Head of caudate nucleus (tissue), 42 donors: ENCODE measurements at regions of chr6 and their contacts with region 1.

Region 1: DNA sequence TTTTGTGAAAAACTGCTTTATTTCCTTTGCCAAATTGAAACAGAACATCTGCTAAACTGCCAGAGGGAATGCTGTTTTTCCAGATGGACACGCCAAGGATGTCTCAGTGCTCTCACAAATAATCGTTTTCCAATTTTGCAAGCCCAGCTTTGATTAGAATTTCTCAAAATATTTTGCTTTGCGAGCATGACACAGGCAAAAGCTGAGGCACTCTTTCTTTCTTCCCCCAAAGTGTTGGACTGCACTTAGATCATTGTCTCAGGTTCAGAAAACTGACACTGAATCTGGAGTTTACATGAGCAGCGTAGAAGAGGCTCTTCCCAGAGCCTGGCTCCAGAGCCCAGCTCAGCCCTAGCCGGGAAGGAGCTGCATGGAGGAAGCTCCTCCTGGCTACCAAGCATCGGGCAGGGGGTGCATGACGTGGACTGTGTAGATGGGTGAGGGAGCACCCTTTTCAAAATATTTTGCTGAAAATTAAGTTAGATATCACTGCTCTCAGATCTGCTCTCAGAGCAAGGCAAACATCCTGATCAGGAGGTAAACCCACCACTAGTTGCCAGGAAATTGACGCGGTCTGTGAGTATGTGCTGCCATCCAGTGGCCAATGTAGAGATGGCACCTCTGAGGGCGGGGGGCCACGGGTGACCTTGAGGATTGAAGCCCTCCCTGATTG is 107.5 kb downstream of the SLC22A3 start:
- DNase-seq: peak; percentile 28 to 87 (median 66)

Region 2: GRCh38 chr6:159513074-159513720 is 942.5 kb before region 1 on chr6:
- intact Hi-C with region 1: no loop called
- DNase-seq: no peak

Region 3: GRCh38 chr6:159862103-159862502 is 593.6 kb before region 1 on chr6:
- intact Hi-C with region 1: loop called (anchors 10 kb)
- DNase-seq: peak in 1 of 42 donors; percentile 3

Region 4: DNA sequence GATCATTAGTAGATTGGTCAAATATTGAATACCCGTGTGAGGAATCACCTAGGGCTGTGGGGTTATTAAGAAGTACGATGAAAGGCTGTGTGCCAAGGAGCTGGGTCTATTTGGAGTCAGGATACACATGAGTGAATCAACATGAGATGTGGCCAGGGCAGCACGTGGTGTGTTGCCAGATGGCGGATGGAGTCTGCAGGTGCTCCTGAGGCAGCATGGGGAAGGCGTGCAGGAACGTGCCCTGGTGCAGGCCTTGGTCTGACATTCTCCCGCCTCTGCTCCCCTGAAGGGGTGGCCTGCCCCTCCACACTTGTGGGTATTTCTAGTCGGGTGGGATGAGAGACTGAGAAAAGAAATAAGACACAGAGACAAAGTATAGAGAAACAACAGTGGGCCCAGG is 373.1 kb before region 1 on chr6:
- intact Hi-C with region 1: loop called (anchors 5 kb)
- DNase-seq: peak in 1 of 42 donors; percentile 21

Region 5: DNA sequence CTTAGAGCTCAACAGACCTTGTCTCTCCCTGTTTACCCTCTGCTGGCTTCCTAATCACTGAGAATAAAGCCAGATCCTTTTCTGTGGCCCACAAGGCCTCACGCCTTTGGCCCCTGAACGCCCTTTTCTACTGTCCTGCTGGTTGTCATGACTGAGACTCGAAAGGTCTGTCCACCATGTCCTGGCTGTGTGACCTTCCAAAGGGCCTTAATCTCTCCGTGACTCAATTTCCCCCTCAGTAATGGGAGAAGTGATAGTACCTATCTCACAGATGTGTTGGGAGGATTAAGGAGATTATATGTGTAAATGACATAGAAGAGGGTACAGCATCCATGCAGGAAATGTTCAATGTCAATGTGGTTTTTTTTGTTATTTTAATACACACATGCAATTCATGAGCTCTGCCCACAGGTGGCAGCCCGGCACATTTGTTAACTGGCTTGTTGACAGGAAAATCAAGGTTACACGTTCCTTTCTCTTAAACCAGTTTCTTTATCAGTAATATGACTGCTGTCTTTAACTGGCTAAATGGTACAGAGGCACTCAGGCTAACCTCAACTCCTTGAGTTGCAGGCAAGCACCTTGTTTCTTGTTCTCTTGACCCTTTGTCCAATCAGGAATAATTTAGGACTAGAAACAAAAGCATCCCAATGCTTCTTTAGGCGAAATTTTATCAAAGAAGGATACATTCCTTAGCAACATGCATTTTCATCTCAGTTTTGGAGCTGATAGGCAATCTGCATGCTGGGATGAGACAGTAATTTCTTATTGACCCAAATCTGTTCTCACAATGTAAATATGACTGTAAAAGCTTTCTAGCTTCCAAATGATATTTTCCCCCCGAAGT is 317.5 kb before region 1 on chr6:
- intact Hi-C with region 1: loop called (anchors 10 kb)
- DNase-seq: peak in 40 of 42 donors; percentile 18 to 79 (median 54)